AG04449 (cell line): ENCODE measurements at regions of chr14 and their contacts with region 1.

Region 1: GRCh38 chr14:67571272-67571850 is 28.7 kb downstream of the PIGH start:
- DNase-seq: no peak
- H3K4me3 ChIP-seq: no peak overlapping the region
- CTCF ChIP-seq: peak; percentile 92

Region 2: GRCh38 chr14:67426983-67427606 is 144.3 kb before region 1 on chr14:
- CTCF ChIA-PET with region 1: interaction called, 582 read pairs
- POLR2A ChIA-PET with region 1: interaction called, 4 read pairs
- DNase-seq: no peak
- H3K4me3 ChIP-seq: no peak overlapping the region
- CTCF ChIP-seq: peak; percentile 78

Region 3: GRCh38 chr14:67453575-67454300 is 117.6 kb before region 1 on chr14:
- CTCF ChIA-PET with region 1: interaction called, 13 read pairs
- POLR2A ChIA-PET with region 1: no interaction called
- DNase-seq: no peak
- H3K4me3 ChIP-seq: no peak overlapping the region
- CTCF ChIP-seq: no peak

Region 4: GRCh38 chr14:67526676-67527459 is 44.5 kb before region 1 on chr14:
- CTCF ChIA-PET with region 1: interaction called, 80 read pairs
- POLR2A ChIA-PET with region 1: no interaction called
- DNase-seq: no peak
- H3K4me3 ChIP-seq: no peak overlapping the region
- CTCF ChIP-seq: peak; percentile 45

Region 5: GRCh38 chr14:67541448-67542387 is 29.6 kb before region 1 on chr14:
- CTCF ChIA-PET with region 1: interaction called, 10 read pairs
- POLR2A ChIA-PET with region 1: no interaction called
- DNase-seq: no peak
- H3K4me3 ChIP-seq: no peak overlapping the region
- CTCF ChIP-seq: no peak

Region 6: GRCh38 chr14:67557126-67557525 is 14.2 kb before region 1 on chr14:
- CTCF ChIA-PET with region 1: interaction called, 91 read pairs
- POLR2A ChIA-PET with region 1: no interaction called
- DNase-seq: no peak
- H3K4me3 ChIP-seq: no peak overlapping the region
- CTCF ChIP-seq: no peak

Region 7: DNA sequence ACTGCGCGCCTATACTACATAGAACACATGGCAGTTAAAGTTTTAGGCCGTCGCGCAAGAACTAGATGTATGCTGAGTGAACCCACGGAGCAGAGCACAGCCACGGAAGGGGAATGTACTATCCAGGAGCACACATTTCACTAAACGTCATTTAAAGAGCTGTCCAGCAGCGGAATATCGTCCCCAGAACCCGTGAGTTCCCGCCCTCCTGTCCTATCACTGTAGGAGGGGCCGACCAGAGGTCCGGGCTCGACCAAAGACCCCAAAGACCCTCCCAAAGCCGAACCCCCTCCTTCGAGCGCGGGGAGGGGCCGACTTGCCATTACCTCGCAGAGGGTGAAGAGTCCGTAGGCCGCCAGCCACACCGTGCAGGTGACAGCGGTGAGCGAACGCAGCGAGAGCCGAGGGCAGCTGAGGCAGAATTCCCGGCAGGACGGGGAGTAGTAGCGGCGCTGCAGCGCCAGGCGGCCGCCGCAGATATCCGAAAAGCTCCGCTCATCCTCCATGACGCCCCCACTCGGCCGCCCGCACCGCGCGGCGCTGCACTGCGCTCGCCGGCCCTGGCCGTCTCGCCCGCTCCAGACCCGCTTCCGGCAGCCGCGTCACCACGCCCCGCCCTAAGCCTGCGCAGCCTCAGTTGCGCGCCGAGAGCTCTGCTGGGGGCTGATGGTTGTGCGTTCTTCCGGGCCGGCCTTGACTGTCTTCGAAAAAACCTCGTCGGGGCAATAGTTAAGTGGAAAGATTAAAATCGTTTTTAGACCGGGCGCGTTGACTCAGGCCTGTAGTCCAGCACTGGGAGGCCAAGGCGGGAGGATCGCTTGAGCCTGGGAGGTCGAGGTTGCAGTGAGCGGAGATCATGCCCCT is 28.6 kb after region 1 on chr14 and contains the start of gene PIGH:
- CTCF ChIA-PET with region 1: interaction called, 21 read pairs
- POLR2A ChIA-PET with region 1: no interaction called
- DNase-seq: no peak
- H3K4me3 ChIP-seq: peak within 1 kb of the TSS; percentile 86
- CTCF ChIP-seq: peak; percentile 69

Region 8: DNA sequence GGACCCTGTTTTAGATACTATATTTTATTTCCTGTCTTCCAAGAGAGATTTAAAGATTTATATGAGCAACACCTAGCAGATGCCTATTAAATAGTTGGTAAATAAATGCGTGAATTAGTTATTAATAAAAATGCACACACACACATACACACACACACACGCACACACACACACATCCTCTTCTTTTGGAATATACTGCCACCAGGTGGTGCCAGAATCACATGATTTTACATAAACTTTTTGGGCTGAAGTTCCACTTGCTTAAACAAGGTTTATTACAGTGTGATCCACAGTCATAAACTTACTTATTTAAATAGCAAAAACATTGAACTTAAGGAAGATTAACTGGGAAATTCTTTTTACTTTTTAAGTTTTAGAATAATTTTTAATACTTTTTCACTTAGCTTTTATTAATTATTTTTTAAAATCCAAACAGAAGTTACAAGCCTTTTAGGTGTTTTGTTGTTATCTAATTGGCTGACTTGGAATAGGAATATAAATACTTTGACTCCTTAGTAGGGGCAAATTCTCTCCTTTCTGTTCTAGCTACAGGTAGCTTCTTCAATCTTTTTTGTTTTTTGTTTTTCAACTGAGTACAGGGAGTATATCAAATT is 265.8 kb after region 1 on chr14:
- CTCF ChIA-PET with region 1: no interaction called
- POLR2A ChIA-PET with region 1: no interaction called
- DNase-seq: peak; percentile 54
- H3K4me3 ChIP-seq: no peak overlapping the region
- CTCF ChIP-seq: peak; percentile 64